Posterior vena cava (tissue), 2 donors: ENCODE measurements at regions of chrX and their contacts with region 1.

Region 1: DNA sequence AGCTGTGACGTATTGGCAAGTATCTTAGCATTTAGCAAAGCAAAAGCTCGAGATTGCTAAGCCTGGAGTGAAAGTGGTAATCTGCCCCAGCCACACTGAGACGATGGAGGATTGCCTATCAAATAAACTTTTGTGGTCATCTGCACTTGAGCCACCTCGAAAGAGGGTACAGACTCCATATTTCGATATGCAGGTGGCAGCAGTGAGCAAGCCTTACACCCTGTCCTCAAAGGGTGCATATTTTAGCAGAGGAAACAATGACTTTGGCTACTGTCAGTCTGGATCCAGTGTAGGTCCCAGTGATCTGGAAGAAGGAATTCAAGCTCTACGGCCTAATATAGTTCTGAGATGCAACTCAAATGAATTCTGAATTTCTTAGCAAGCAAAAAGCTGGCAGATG is 153.9 kb downstream of the ATG4A start:
- DNase-seq: no peak

Region 2: DNA sequence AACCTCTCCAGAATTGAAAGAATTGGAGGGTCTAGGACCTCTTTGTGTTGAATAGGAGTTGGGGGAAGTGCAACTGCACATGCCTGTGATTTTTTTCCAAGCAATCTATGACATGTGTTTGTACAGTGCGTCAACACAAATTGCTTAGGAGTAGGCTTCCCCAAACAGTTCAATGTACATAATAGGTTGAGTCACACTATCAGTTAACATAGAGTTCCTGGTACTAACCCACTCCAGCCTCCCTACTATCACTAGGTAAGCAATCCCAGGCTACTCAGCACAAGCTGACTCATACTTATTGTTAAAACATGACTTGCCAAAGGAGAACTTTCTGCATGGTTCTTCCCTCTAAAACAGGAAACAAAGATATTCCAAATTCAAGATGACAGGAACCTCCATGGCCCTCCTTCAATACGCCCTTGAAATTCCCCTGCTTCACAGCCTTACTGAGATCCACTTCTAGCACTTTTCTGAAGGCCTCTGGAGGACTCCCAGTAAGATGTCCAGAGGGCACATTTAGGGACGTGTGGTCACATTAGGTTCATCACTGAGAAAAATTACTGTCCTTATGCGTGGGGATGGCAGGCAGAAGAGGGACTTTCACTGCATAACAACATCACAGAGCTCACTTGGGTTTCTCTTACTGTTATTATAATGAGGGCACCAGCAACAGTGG is 209.0 kb before region 1 on chrX:
- intact Hi-C with region 1: no loop called
- DNase-seq: no peak

Region 3: DNA sequence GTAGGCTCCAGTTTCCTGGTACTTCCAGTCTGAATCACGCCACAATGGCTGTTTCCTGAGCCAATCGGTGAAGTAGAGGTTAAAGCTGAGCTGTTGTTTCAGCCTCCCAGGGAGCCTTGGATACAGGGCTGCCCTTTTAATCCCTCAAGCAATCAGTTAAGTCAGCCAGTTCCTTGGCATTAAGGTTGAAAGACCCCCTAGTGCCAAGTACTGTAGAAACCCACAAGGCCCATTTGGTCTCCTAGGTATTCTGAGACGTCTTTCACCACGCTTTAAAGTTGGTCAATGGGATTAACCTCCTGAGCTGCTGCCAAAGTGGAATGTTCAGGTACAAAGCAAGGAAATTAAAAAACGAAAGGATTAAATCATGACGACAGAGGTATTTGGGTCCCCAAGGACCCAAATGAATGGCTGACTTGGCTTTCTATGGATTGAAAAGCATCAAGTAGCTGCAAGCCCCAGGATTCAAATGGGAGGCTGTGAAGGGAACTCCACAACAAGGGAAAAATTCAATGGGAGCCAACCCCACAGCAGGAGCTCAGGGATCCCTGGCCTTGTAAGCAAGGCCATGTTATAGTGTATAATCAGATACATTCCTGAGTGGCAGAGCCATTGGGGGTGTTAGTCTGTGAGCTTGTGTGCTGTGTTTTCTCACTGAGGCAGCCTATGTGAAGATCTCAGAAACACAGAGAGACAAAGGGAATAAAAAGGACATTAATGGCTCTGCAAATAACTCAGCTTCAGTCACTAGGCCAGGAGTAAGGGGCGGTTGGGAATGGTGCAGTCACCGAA is 67.9 kb before region 1 on chrX:
- intact Hi-C with region 1: no loop called
- DNase-seq: no peak

Region 4: GRCh38 chrX:108299101-108299591 is 53.7 kb after region 1 on chrX:
- intact Hi-C with region 1: no loop called
- DNase-seq: no peak

Region 5: GRCh38 chrX:109485470-109486340 is 1240.2 kb after region 1 on chrX:
- intact Hi-C with region 1: loop called in 1 of 2 experiments (anchors 5 kb)
- DNase-seq: peak; percentile 83